ENCODE measurements at regions of chr17 and their contacts with region 1.

Region 1: DNA sequence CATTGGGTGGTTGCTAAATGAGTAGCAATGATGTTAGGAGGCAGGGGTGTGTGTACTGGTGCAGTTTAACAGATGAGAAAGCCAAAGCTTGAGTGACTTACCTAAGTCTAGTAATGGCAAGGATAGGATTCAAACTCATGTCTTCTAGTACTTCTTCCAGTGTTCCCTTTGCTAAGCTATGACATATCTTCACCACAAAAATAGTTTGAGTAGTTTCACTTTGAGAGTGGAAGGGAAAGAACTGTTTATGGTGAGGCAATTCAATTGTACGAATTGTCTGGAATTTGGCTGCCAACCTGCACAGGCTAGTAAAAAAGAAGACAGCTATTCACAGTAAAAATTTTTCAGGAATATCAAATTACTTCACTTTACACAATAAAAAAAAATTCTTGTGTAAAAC is 138.0 kb downstream of the NLK start:
- DNase-seq: peak; percentile 47
- H3K4me3 ChIP-seq: no peak overlapping the region
- H3K27me3 ChIP-seq: no peaks in the 10 kb centered on the region
- CTCF ChIP-seq: no peak

Region 2: GRCh38 chr17:28169621-28170349 is 10.7 kb before region 1 on chr17:
- CTCF ChIA-PET with region 1: interaction called, 3 read pairs
- POLR2A ChIA-PET with region 1: interaction called, 25 read pairs
- DNase-seq: no peak
- H3K4me3 ChIP-seq: no peak overlapping the region
- H3K27me3 ChIP-seq: no peaks in the 10 kb centered on the region
- CTCF ChIP-seq: no peak